GM10248 (cell line): ENCODE measurements at regions of chr9 and their contacts with region 1.

Region 1: GRCh38 chr9:21413624-21414023 is 4.7 kb downstream of the IFNA8 start:
- DNase-seq: no peak
- CTCF ChIP-seq: peak; percentile 44

Region 2: GRCh38 chr9:20997503-20998076 is 416.0 kb before region 1 on chr9:
- CTCF ChIA-PET with region 1: no interaction called
- POLR2A ChIA-PET with region 1: no interaction called
- DNase-seq: no peak
- CTCF ChIP-seq: no peak

Region 3: DNA sequence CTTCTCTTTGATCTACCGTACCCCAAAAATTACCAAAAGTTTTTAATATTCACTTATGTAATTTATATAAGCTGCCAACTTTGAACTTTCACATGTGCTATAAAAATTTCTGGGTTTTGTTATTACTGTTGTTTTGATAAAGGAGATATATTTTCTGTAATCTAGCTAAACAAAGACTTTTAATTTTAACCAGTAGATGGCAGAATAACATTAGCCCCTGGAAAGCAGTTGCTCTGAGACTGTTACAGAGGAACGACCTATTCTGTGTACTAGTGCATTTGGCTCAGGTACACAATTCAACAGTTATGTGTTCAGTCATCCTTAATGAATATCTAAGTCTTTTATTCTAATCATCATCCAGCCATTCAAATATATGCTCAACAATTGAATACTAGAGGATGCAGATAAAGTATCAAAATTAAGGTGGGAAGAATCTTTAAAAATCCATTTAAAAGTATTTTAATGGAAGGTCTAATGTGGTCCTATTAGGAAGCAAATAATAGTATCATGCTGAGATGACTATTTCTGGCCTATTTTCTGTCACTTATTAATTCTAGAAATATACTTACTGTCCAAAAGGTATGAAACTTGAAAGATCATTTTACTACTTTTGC is 87.0 kb before region 1 on chr9:
- CTCF ChIA-PET with region 1: interaction called, 13 read pairs
- POLR2A ChIA-PET with region 1: no interaction called
- DNase-seq: peak; percentile 49
- CTCF ChIP-seq: peak; percentile 35

Region 4: DNA sequence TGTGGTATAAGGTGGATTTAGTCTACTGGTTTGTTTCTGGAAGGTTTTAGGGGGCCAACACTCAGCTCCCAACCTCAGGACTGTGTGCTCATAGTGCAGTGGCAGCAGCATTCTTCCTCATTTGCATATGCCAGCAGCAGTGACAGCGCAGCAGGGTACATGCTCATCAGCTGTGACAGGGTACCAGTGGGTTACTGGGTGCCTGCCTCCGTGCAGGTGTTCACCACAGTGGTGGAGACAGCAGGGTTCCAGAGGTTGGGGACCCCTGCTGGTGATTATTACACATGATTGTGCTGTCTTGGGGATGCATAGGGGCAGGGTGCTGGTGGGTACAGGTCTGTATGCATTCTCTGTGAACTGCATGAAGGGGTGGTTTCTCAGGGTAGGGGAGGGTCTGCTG is 114.0 kb after region 1 on chr9:
- CTCF ChIA-PET with region 1: no interaction called
- POLR2A ChIA-PET with region 1: no interaction called
- DNase-seq: peak; percentile 20
- CTCF ChIP-seq: peak; percentile 1